ENCODE measurements at regions of chr4 and their contacts with region 1.

Region 1: GRCh38 chr4:153573881-153574802 is 108.0 kb downstream of the TMEM131L start:
- DNase-seq: peak; percentile 58
- H3K4me3 ChIP-seq: no peak overlapping the region
- H3K27ac ChIP-seq: no peak overlapping the region; a peak in 1 of 4 replicates
- H3K4me1 ChIP-seq: peaks cover 0 to 9% of the 10 kb centered on the region in 2 experiments; a peak in 3 of 4 replicates
- H3K27me3 ChIP-seq: no peaks in the 10 kb centered on the region
- CTCF ChIP-seq: peak; percentile 82
- EP300 ChIP-seq: no peak
- RAD21 ChIP-seq: peak; percentile 93

Region 2: DNA sequence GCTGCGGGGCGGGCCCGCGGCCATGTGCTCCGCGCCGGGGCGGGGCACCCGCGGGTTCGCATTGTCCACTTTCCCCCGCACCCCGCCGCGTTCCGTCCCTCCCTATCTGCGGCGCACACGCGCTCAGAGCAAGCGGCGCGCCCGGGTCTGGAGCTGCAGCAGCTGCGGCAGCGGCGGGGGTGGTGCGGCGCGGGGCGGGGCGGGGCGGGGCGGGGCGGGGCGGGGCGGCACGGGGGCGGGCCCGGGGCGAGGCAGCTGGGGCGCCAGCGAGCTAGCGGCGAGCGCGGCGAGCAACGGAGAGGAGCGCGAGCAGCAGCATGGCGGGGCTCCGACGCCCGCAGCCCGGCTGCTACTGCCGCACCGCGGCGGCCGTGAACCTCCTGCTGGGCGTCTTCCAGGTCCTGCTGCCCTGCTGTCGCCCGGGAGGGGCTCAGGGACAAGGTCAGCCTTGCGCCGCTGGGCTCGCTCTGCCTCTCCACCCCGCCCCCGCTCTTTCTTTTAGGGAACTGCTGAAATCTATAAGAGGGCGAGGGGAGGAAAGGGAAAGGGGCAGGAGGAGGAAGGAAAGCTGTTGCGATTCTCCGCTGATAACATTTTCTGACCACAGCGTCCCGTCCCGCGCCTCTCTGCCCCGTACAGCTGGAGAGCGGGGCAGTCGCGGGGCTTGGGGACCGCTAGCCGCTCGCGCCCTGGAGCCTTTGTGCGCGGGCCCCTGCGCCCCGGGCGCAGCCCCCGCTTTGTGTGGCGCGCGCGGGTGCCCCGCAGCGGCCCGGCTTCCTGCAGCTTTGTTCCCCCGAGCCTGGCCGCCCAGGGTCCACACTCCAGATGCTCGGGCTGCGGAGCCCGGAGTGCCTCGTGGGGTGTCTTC is 107.8 kb before region 1 on chr4 and contains the start of gene TMEM131L:
- CTCF ChIA-PET with region 1: interaction called, 11 read pairs
- POLR2A ChIA-PET with region 1: interaction called, 4 read pairs
- DNase-seq: peak; percentile 95
- H3K4me3 ChIP-seq: peak within 1 kb of the TSS; percentile 82 to 88
- H3K27ac ChIP-seq: peak within 1 kb of the TSS; percentile 42 to 90; a peak in 3 of 4 replicates
- H3K4me1 ChIP-seq: peaks cover 26 to 31% of the 10 kb centered on the region in 2 experiments
- H3K27me3 ChIP-seq: no peaks in the 10 kb centered on the region
- CTCF ChIP-seq: peak; percentile 8; the same call in 1 of the 2 replicates
- EP300 ChIP-seq: no peak
- RAD21 ChIP-seq: no peak; the same call in 1 of the 2 replicates
- polyA plus RNA-seq, gene TMEM131L: 6.2 and 6.8 TPM in 2 replicates

Region 3: GRCh38 chr4:153611679-153612078 is 37.5 kb after region 1 on chr4:
- CTCF ChIA-PET with region 1: no interaction called
- POLR2A ChIA-PET with region 1: no interaction called
- DNase-seq: no peak
- H3K4me3 ChIP-seq: no peak overlapping the region
- H3K27ac ChIP-seq: no peak overlapping the region
- H3K4me1 ChIP-seq: no peaks in the 10 kb centered on the region
- H3K27me3 ChIP-seq: no peaks in the 10 kb centered on the region
- CTCF ChIP-seq: no peak
- EP300 ChIP-seq: no peak
- RAD21 ChIP-seq: no peak